Cardiac septum (tissue), 1 donor: ENCODE measurements at regions of chr19 and their contacts with region 1.

Region 1: GRCh38 chr19:10928525-10929401 is at the starts of genes TIMM29 and YIPF2:
- DNase-seq: peak; percentile 98
- total RNA-seq, gene TIMM29: 14.1 TPM
- total RNA-seq, gene YIPF2: 20.8 TPM

Region 2: GRCh38 chr19:10871711-10872545 is 56.8 kb before region 1 on chr19:
- intact Hi-C with region 1: loop called (anchors 2 kb)
- DNase-seq: no peak

Region 3: DNA sequence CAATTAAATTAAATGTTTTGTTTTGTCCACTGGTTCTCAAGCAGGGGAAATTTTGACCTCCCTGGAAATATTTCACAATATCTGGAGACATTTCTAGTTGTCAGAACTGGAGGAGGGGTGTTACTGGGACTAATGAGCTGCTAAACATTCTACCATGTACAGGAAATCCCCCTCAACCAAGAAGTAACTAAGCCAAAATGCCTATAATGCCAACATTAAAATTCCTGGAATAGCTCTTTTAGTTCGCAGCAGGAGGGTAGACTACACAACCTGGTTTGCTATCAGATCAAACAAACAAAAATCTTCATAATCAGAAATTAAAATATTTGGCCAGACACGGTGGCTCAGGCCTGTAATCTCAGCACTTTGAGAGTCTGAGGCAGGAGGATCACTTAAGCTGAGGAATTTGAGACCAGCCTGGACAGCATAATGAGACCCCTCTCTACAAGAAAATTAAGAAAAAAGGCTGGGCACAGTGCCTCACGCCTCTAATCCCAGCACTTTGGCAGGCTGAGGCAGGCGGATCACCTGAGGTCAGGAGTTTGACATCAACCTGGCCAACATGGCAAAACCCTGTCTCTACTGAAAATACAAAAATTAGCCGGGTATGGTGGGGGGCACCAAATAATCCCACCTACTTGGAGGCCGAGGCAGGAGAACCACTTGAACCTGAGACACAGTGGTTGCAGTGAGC is 18.3 kb after region 1 on chr19:
- intact Hi-C with region 1: no loop called
- DNase-seq: no peak

Region 4: GRCh38 chr19:10960314-10961072 is 31.7 kb after region 1 on chr19 and contains the start of gene SMARCA4:
- intact Hi-C with region 1: loop called (anchors 2 kb)
- DNase-seq: peak; percentile 99
- total RNA-seq, gene SMARCA4: 52.2 TPM